ENCODE measurements at regions of chr7 and their contacts with region 1.

Region 1: DNA sequence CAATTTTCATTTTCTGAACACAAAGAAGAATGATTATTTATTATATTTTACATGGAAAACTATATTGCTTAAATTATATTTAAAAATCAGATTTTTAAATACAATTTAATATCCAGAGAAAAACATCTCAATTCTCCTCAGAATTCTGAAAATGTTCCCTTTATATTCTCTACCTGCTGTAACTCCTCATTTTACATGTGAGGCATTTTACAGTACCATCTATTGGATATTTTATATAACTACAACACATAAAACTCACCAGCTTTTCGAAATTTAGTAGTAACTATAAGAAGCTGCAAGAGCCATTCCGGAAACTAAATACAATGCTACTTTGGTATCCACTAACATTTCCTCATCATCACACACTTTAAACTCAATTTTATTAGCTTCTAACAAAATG is 264.6 kb downstream of the DGKB start:
- DNase-seq: peak; percentile 23
- ATAC-seq: 0 out of 2 replicates have a peak, but pooled peaks have one; percentile 38
- H3K4me3 ChIP-seq: no peak overlapping the region
- H3K27ac ChIP-seq: no peak overlapping the region
- H3K4me1 ChIP-seq: peaks cover 7% of the 10 kb centered on the region; the same call in 1 of the 2 replicates
- H3K27me3 ChIP-seq: no peaks in the 10 kb centered on the region
- CTCF ChIP-seq: no peak; the same call in 1 of the 2 replicates

Region 2: DNA sequence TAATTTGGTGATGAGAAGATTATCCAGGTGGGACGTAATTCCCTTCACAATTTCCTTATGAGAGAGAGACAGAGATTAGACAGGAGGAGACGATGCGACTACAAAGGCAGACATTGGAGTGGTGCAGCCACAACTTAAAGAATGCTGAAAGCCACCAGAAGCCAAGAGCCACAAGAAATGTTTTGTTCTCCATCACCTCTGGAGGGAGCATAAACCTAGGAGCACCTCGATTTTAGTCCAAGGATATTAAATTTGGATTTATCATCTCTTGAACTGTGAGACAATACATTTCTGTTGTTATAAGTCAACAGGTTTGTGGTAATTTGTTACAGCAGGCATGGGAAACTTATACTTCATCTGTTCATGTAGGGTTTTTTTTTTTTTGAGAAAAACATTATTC is 154.3 kb before region 1 on chr7:
- CTCF ChIA-PET with region 1: interaction called, 3 read pairs
- POLR2A ChIA-PET with region 1: no interaction called
- intact Hi-C with region 1: loop called (anchors 1 kb)
- DNase-seq: peak; percentile 37
- ATAC-seq: peak; percentile 71
- H3K4me3 ChIP-seq: no peak overlapping the region
- H3K27ac ChIP-seq: no peak overlapping the region
- H3K4me1 ChIP-seq: no peaks in the 10 kb centered on the region
- H3K27me3 ChIP-seq: no peaks in the 10 kb centered on the region
- CTCF ChIP-seq: peak; percentile 59

Region 3: GRCh38 chr7:14495633-14496032 is 142.3 kb before region 1 on chr7:
- CTCF ChIA-PET with region 1: no interaction called
- POLR2A ChIA-PET with region 1: no interaction called
- intact Hi-C with region 1: loop called (anchors 5 kb)
- DNase-seq: no peak
- ATAC-seq: no peak
- H3K4me3 ChIP-seq: no peak overlapping the region
- H3K27ac ChIP-seq: no peak overlapping the region
- H3K4me1 ChIP-seq: no peaks in the 10 kb centered on the region
- H3K27me3 ChIP-seq: no peaks in the 10 kb centered on the region
- CTCF ChIP-seq: no peak